ENCODE measurements at regions of chr1 and their contacts with region 1.

Region 1: GRCh38 chr1:114282751-114283403 is 129.2 kb upstream of the SYT6 start:
- DNase-seq: peak; percentile 83 to 91 (median 89)
- H3K4me3 ChIP-seq: no peak overlapping the region
- H3K27ac ChIP-seq: no peak overlapping the region
- H3K4me1 ChIP-seq: peaks cover 4% of the 10 kb centered on the region
- H3K27me3 ChIP-seq: no peaks in the 10 kb centered on the region
- CTCF ChIP-seq: peak; percentile 53 to 79 (median 79)
- EP300 ChIP-seq: no peak
- POLR2A ChIP-seq: no peak

Region 2: DNA sequence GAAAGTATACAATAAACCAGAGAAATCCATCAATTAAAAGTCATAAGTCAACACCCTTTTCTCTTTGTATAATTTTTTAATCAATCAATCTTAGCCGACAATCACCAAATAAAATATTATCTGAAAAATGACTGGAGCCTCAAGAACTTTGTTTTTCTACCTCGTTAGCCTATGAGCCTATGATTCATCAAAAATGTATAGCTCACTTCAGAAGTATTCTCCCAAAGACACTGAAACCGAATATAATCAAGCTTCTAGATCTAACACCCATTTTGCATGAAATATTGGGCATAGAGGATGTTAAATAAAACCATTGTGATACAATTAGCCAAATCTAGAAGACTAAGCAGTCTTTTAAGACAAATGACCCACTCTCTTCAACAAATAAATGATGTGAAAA is 452.8 kb before region 1 on chr1:
- intact Hi-C with region 1: loop called in 3 of 4 experiments (anchors 5 to 10 kb)
- DNase-seq: no peak
- H3K4me3 ChIP-seq: no peak overlapping the region
- H3K27ac ChIP-seq: no peak overlapping the region
- H3K4me1 ChIP-seq: no peaks in the 10 kb centered on the region
- H3K27me3 ChIP-seq: no peaks in the 10 kb centered on the region
- CTCF ChIP-seq: no peak
- EP300 ChIP-seq: no peak
- POLR2A ChIP-seq: no peak

Region 3: GRCh38 chr1:113835642-113836307 is 447.1 kb before region 1 on chr1:
- intact Hi-C with region 1: loop called in 3 of 4 experiments (anchors 5 to 10 kb)
- DNase-seq: no peak
- H3K4me3 ChIP-seq: no peak overlapping the region
- H3K27ac ChIP-seq: no peak overlapping the region
- H3K4me1 ChIP-seq: no peaks in the 10 kb centered on the region
- H3K27me3 ChIP-seq: no peaks in the 10 kb centered on the region
- CTCF ChIP-seq: peak; percentile 32 to 61 (median 43)
- EP300 ChIP-seq: no peak
- POLR2A ChIP-seq: no peak

Region 4: DNA sequence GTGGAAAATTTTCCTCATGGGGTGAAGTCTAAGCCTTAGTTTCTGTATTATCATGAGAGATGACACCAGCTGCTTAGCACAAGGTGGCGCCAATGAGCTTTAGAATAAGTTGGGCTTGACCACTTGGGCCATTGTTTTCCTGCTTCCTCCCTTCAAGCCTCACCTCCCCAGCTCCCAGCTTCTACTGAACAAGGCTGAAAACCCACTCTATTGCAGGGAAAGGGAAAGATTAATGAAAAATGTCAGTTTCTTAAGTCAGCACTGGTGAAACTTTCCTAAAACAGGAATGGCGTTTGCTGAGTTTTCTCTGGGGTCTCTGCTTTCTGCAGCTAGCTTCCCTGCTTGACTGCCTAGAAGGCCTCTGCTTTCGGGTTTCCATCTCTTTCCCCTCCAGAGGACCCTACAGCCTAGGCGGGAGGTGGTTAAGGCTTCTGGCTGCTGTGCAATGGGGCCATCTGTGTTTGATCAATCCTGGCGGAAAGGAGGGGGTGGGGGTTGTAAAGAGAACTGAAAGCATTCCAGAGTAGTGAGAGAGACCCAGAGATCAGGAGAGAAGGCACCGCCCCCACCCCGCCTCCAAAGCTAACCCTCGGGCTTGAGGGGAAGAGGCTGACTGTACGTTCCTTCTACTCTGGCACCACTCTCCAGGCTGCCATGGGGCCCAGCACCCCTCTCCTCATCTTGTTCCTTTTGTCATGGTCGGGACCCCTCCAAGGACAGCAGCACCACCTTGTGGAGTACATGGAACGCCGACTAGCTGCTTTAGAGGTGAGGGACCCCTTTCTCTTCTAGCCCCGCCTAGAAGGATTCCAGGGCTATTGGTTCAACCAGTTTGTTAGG is 303.8 kb before region 1 on chr1 and contains the start of gene OLFML3:
- intact Hi-C with region 1: loop called in 3 of 4 experiments (anchors 2 to 5 kb)
- DNase-seq: peak; percentile 82 to 92 (median 88)
- H3K4me3 ChIP-seq: peak within 1 kb of the TSS; percentile 35
- H3K27ac ChIP-seq: peak within 1 kb of the TSS; percentile 36 to 72
- H3K4me1 ChIP-seq: peaks cover 20% of the 10 kb centered on the region
- H3K27me3 ChIP-seq: no peaks in the 10 kb centered on the region
- CTCF ChIP-seq: peak; percentile 26 to 70 (median 66)
- EP300 ChIP-seq: no peak
- POLR2A ChIP-seq: no peak
- total RNA-seq, gene OLFML3: 69.7 to 157 (median 119) TPM

Region 5: DNA sequence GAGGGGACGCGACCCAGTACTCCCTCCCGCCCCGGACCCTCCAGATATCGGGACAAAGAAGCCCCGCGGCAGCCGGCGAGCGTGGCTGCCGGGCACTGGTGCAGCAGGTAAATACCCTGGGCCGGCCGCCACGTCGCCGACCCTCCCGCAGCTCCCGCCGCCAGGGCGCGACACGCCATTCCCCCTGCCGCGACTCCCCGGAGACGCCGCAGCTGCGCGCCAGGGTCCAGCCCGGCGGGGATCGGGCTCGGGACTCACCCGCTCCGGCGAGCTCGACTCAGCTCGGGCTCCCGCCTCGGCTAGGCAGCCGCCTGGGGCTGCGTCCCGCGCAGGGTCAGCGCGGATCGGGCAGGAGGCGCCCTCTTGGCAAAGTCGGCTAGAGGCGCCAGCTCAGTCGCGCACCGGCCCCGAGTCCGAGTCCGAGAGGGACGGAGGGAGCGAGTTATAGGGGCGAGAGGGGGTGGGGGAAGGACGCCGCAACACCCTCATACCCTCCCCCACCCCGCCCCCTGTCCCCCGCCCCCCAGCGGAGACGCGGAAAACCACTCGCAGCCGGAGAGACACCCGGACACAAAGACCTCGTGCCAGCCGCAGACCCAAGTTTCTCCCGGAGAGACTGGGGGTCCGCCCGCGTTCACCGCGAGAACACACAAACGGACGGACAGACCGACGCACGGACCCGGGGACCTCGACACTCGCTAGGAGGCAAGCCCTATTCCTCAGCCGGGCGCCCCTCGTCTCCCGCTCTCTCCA is 130.2 kb before region 1 on chr1:
- intact Hi-C with region 1: loop called in 1 of 4 experiments (anchors 10 kb)
- DNase-seq: peak; percentile 31 to 65 (median 42)
- H3K4me3 ChIP-seq: peak overlapping the region; percentile 31
- H3K27ac ChIP-seq: no peak overlapping the region
- H3K4me1 ChIP-seq: peaks cover 11% of the 10 kb centered on the region
- H3K27me3 ChIP-seq: peaks cover 13% of the 10 kb centered on the region
- CTCF ChIP-seq: no peak
- EP300 ChIP-seq: no peak
- POLR2A ChIP-seq: no peak